ENCODE measurements at regions of chr11 and their contacts with region 1.

Region 1: GRCh38 chr11:108647701-108648527 is 17.0 kb upstream of the DDX10 start:
- DNase-seq: peak; percentile 82 to 84
- H3K4me3 ChIP-seq: no peak overlapping the region
- H3K4me3 Mint-ChIP-seq: no peak overlapping the region
- H3K27ac Mint-ChIP-seq: no peak overlapping the region
- H3K4me1 ChIP-seq: no peaks in the 10 kb centered on the region; the same call in 1 of the 2 replicates
- H3K4me1 Mint-ChIP-seq: peaks cover 5% of the 10 kb centered on the region
- H3K27me3 ChIP-seq: no peaks in the 10 kb centered on the region
- H3K27me3 Mint-ChIP-seq: peaks cover 11% of the 10 kb centered on the region
- CTCF ChIP-seq: peak; percentile 97 to 98

Region 2: DNA sequence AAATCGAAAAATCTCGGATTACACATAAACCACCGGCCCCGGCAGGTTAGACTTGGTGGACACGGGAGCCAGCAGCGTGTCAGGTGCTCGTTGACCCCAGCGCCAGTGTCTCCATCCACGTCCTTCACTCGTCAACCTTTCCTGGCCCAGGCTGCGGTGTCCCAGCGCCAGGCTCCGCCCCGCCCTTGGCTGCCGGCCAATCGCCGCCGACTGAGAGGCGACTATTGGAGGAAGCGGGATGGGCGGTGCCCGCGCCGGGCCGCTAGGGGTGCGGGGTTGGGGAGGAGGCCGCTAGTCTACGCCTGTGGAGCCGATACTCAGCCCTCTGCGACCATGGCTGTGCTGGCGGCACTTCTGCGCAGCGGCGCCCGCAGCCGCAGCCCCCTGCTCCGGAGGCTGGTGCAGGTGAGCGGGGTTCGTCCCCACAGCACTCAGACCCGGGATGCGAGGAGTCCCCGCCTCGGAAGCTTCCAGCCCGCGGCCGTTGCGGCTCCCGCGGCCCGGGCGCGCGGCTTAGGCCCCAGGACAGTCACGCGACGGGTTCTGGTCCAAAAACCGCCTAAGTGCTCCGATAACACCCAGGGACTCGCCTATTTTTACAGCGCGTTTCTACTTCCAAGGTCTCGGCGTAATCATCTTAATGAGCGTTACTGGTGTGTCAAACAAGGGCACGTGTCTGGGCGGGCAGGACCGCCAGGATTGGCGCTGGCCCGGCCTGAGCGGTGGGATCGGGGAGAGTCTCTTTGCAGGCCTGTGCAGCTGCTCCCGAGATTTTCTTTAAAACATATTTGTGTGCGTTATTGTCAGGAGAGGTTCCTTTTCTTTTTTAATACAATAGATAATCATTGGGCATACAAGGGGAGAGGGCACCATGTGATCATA is 526.4 kb before region 1 on chr11 and contains the start of gene ACAT1:
- CTCF ChIA-PET with region 1: interaction called, 3 read pairs
- POLR2A ChIA-PET with region 1: no interaction called
- intact Hi-C with region 1: loop called (anchors 1 kb)
- DNase-seq: peak; percentile 98 to 100
- H3K4me3 ChIP-seq: peak within 1 kb of the TSS; percentile 88
- H3K4me3 Mint-ChIP-seq: peak within 1 kb of the TSS; percentile 81
- H3K27ac Mint-ChIP-seq: peak within 1 kb of the TSS; percentile 66
- H3K4me1 ChIP-seq: peaks cover 13% of the 10 kb centered on the region
- H3K4me1 Mint-ChIP-seq: peaks cover 27% of the 10 kb centered on the region
- H3K27me3 ChIP-seq: no peaks in the 10 kb centered on the region
- H3K27me3 Mint-ChIP-seq: no peaks in the 10 kb centered on the region
- CTCF ChIP-seq: peak; percentile 54 to 67
- total RNA-seq, gene ACAT1: 131 and 134 TPM in 2 replicates

Region 3: GRCh38 chr11:108222686-108223448 is 425.0 kb before region 1 on chr11 and contains the start of gene ATM:
- CTCF ChIA-PET with region 1: interaction called, 3 read pairs
- POLR2A ChIA-PET with region 1: no interaction called
- intact Hi-C with region 1: loop called (anchors 1 kb)
- DNase-seq: peak; percentile 100
- H3K4me3 ChIP-seq: peak within 1 kb of the TSS; percentile 62
- H3K4me3 Mint-ChIP-seq: no peak within 1 kb of the TSS
- H3K27ac Mint-ChIP-seq: no peak within 1 kb of the TSS
- H3K4me1 ChIP-seq: peaks cover 19% of the 10 kb centered on the region
- H3K4me1 Mint-ChIP-seq: peaks cover 21% of the 10 kb centered on the region
- H3K27me3 ChIP-seq: no peaks in the 10 kb centered on the region
- H3K27me3 Mint-ChIP-seq: no peaks in the 10 kb centered on the region
- CTCF ChIP-seq: peak; percentile 86 to 98
- total RNA-seq, gene ATM: 77.1 and 77.9 TPM in 2 replicates

Region 4: DNA sequence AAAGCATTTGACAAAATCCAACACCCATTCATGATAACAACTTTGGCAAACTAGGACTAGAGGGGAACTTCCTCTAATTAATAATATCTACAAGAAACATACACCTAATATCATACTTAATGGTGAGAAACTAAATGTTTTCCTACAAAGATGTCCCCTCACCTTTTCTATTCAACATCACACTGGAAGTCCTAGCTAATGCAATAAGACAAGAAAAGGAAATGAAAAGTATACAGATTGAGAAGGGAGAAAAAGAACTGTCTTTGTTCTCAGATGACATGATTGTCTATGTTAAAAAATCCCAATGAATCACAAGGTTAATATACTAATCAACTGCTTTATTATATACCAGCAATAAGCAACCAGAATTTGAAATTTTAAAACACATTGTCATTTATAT is 233.0 kb before region 1 on chr11:
- CTCF ChIA-PET with region 1: no interaction called
- POLR2A ChIA-PET with region 1: no interaction called
- intact Hi-C with region 1: loop called (anchors 1 kb)
- DNase-seq: no peak
- H3K4me3 ChIP-seq: no peak overlapping the region
- H3K4me3 Mint-ChIP-seq: no peak overlapping the region
- H3K27ac Mint-ChIP-seq: no peak overlapping the region
- H3K4me1 ChIP-seq: no peaks in the 10 kb centered on the region
- H3K4me1 Mint-ChIP-seq: no peaks in the 10 kb centered on the region
- H3K27me3 ChIP-seq: no peaks in the 10 kb centered on the region
- H3K27me3 Mint-ChIP-seq: peaks cover 3% of the 10 kb centered on the region
- CTCF ChIP-seq: no peak

Region 5: GRCh38 chr11:108497317-108498045 is 150.4 kb before region 1 on chr11:
- CTCF ChIA-PET with region 1: no interaction called
- POLR2A ChIA-PET with region 1: no interaction called
- intact Hi-C with region 1: loop called (anchors 1 kb)
- DNase-seq: peak; percentile 92 to 96
- H3K4me3 ChIP-seq: peak overlapping the region; percentile 74
- H3K4me3 Mint-ChIP-seq: peak overlapping the region; percentile 92
- H3K27ac Mint-ChIP-seq: peak overlapping the region; percentile 98
- H3K4me1 ChIP-seq: peaks cover 37% of the 10 kb centered on the region
- H3K4me1 Mint-ChIP-seq: peaks cover 43% of the 10 kb centered on the region
- H3K27me3 ChIP-seq: no peaks in the 10 kb centered on the region
- H3K27me3 Mint-ChIP-seq: no peaks in the 10 kb centered on the region
- CTCF ChIP-seq: no peak

Region 6: GRCh38 chr11:108588287-108588686 is 59.6 kb before region 1 on chr11:
- CTCF ChIA-PET with region 1: interaction called, 11 read pairs
- POLR2A ChIA-PET with region 1: interaction called, 4 read pairs
- intact Hi-C with region 1: loop called (anchors 1 kb)
- DNase-seq: no peak
- H3K4me3 ChIP-seq: no peak overlapping the region
- H3K4me3 Mint-ChIP-seq: no peak overlapping the region
- H3K27ac Mint-ChIP-seq: no peak overlapping the region
- H3K4me1 ChIP-seq: peaks cover 15% of the 10 kb centered on the region
- H3K4me1 Mint-ChIP-seq: peaks cover 14% of the 10 kb centered on the region
- H3K27me3 ChIP-seq: no peaks in the 10 kb centered on the region
- H3K27me3 Mint-ChIP-seq: no peaks in the 10 kb centered on the region
- CTCF ChIP-seq: no peak

Measured in Caco-2 (cell line).